Left lung (tissue), 14 donors: ENCODE measurements at regions of chr2 and their contacts with region 1.

Region 1: GRCh38 chr2:173079968-173080860 is 4.6 kb downstream of the MAP3K20 start:
- DNase-seq: no peak
- ATAC-seq: peak; percentile 6
- H3K4me3 ChIP-seq: no peak overlapping the region
- H3K27ac ChIP-seq: peak overlapping the region in 1 of 2 donors; percentile 2
- H3K4me1 ChIP-seq: peaks cover 4 to 25% of the 10 kb centered on the region in 2 donors
- H3K27me3 ChIP-seq: no peaks in the 10 kb centered on the region
- CTCF ChIP-seq: no peak

Region 2: DNA sequence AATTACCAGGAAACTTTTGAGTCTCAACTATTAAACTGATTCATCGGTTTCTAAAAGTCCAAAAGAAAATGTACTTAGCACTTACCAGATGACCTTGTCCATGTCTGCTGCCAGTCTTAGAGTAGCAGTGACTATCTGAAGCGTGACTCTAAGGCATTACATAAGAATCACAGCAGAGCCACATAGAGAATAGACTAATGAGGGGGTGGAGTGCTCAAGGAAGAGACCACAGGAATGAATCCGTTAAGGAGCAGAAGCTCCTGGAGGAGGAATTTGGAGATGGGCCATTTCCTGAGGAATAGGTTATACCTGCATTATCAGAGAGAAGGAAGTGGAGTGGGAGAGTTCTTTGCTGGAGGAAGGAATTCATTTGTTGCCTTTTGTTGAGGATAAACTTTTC is 111.4 kb after region 1 on chr2:
- intact Hi-C with region 1: loop called in 1 of 2 experiments (anchors 10 kb)
- DNase-seq: no peak
- ATAC-seq: no peak
- H3K4me3 ChIP-seq: no peak overlapping the region
- H3K27ac ChIP-seq: no peak overlapping the region
- H3K4me1 ChIP-seq: peaks cover 0 to 12% of the 10 kb centered on the region in 2 donors
- H3K27me3 ChIP-seq: no peaks in the 10 kb centered on the region
- CTCF ChIP-seq: no peak